ENCODE measurements at regions of chr3 and their contacts with region 1.

Region 1: DNA sequence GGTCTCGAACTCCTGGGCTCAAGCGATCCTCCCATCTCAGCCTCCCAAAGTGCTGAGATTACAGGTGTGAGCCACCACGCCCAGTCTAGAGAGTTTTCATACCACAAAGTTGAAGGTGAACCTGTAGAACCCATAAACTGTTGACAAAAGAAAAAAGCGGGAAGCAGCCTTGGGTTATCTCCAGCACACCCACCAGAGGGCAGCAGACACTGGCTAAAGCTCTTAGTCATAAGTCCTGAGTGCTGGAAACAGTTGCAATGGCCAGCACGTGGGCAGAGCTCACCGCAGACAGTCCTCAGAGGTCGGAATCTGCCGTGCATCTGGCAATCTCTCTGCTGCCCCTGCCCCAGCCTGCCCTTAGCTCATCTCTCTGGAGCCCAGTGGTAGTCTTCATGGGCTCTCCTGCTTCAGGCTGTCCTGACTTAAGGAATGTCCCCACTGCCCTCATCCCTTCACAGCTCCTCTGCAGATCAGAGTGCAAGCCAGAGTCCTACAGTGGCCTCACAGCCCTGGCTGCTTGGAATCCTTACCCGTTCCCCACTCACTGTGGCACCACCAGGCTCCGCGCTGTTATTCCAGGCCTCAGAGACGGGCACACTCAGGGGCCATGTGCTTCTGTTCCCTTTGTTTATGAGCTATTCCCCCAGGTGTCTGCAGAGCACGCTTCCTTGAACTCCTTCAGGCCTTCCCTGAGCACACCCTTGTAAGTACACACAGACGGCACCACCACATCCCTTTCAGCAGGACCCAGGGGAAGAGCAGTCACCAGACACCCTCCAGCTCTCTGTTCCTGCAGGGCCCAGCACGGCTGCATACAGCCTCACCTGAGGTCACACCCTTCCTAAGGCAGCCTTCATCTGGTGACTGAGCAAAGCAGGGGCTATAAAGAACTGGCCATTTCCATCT is 8.8 kb upstream of the ELP6 start:
- DNase-seq: peak; percentile 88
- ATAC-seq: peak; percentile 96 to 98
- H3K4me3 ChIP-seq: no peak overlapping the region
- H3K27ac ChIP-seq: no peak overlapping the region
- H3K4me1 ChIP-seq: peaks cover 5% of the 10 kb centered on the region
- H3K27me3 ChIP-seq: no peaks in the 10 kb centered on the region
- CTCF ChIP-seq: peak; percentile 89

Region 2: GRCh38 chr3:47128137-47128536 is 394.2 kb before region 1 on chr3:
- intact Hi-C with region 1: no loop called
- DNase-seq: no peak
- ATAC-seq: peak in 1 of 2 donors; percentile 14
- H3K4me3 ChIP-seq: no peak overlapping the region
- H3K27ac ChIP-seq: no peak overlapping the region
- H3K4me1 ChIP-seq: peaks cover 13% of the 10 kb centered on the region
- H3K27me3 ChIP-seq: no peaks in the 10 kb centered on the region
- CTCF ChIP-seq: no peak

Region 3: GRCh38 chr3:47605652-47606051 is 83.3 kb after region 1 on chr3:
- intact Hi-C with region 1: no loop called
- DNase-seq: no peak
- ATAC-seq: no peak
- H3K4me3 ChIP-seq: no peak overlapping the region
- H3K27ac ChIP-seq: no peak overlapping the region
- H3K4me1 ChIP-seq: no peaks in the 10 kb centered on the region
- H3K27me3 ChIP-seq: no peaks in the 10 kb centered on the region
- CTCF ChIP-seq: no peak

Region 4: GRCh38 chr3:47802734-47803477 is 280.6 kb after region 1 on chr3 and contains the start of gene DHX30:
- intact Hi-C with region 1: loop called (anchors 10 kb)
- DNase-seq: peak; percentile 95
- ATAC-seq: peak; percentile 95 to 97
- H3K4me3 ChIP-seq: peak within 1 kb of the TSS; percentile 84
- H3K27ac ChIP-seq: peak within 1 kb of the TSS; percentile 98
- H3K4me1 ChIP-seq: peaks cover 20% of the 10 kb centered on the region
- H3K27me3 ChIP-seq: no peaks in the 10 kb centered on the region
- CTCF ChIP-seq: no peak
- total RNA-seq, gene DHX30: 54.6 TPM

Measured in lower lobe of right lung (tissue), 2 donors.